H1 (cell line): ENCODE measurements at regions of chr1 and their contacts with region 1.

Region 1: GRCh38 chr1:201126832-201127754 is at the start of gene ASCL5:
- DNase-seq: peak in 1 of 2 experiments; percentile 67
- H3K4me3 ChIP-seq: peak within 1 kb of the TSS in 1 of 4 experiments; percentile 35; a peak in 1 of 8 replicates
- H3K27ac ChIP-seq: no peak within 1 kb of the TSS
- H3K4me1 ChIP-seq: peaks cover 3 to 11% (median 9%) of the 10 kb centered on the region in 4 experiments
- H3K27me3 ChIP-seq: no peaks in the 10 kb centered on the region; a peak in 1 of 7 replicates
- CTCF ChIP-seq: no peak
- EP300 ChIP-seq: no peak
- POLR2A ChIP-seq: no peak
- RAD21 ChIP-seq: no peak
- total RNA-seq, gene ASCL5: 0.41 and 0.44 TPM in 2 replicates

Region 2: DNA sequence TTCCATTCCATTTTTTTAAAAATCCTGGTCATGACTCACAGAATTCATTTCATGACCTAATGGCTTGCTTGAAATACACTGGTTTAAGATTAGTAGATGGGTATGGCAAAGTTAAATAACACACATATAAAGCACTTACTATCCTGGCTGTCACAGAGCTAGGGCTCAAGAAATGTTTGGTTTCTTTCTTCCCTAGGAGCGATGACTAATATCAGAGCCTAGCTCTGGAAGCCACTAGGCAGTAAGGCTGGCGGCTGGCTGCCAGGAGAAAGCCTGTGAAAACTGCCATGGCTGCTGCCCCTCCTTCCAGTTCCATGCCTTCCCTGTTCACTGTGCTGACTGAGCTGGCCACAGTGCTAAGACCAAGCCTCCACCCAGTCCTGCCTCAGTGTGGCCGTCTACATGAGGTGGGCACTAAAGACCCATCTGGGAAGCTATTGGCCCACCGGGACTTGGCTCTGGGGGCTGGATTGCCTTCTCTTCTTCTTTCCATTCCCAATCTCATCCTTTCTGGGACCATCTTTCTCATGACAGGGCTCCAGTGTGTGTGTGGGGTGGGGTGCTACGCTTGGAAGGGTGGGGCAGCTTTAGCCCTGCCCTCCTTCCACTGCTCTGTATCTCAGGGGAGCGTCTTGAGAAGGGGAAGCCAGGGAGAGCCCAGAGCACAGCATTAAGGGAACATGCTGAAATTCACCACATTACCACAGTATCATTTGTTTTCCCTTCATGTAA is 10.7 kb after region 1 on chr1:
- CTCF ChIA-PET with region 1: interaction called, 17 read pairs
- POLR2A ChIA-PET with region 1: interaction called, 4 read pairs
- DNase-seq: no peak
- H3K4me3 ChIP-seq: no peak overlapping the region
- H3K27ac ChIP-seq: no peak overlapping the region
- H3K4me1 ChIP-seq: no peaks in the 10 kb centered on the region
- H3K27me3 ChIP-seq: no peaks in the 10 kb centered on the region
- CTCF ChIP-seq: no peak
- EP300 ChIP-seq: no peak
- POLR2A ChIP-seq: no peak
- RAD21 ChIP-seq: no peak

Region 3: GRCh38 chr1:201167041-201167991 is 40.2 kb after region 1 on chr1:
- CTCF ChIA-PET with region 1: no interaction called
- POLR2A ChIA-PET with region 1: no interaction called
- DNase-seq: no peak
- H3K4me3 ChIP-seq: no peak overlapping the region
- H3K27ac ChIP-seq: no peak overlapping the region
- H3K4me1 ChIP-seq: peaks cover 4 to 9% (median 6%) of the 10 kb centered on the region in 4 experiments; a peak in 6 of 7 replicates
- H3K27me3 ChIP-seq: peaks cover 0 to 6% (median 4%) of the 10 kb centered on the region in 4 experiments; a peak in 3 of 7 replicates
- CTCF ChIP-seq: no peak
- EP300 ChIP-seq: no peak
- POLR2A ChIP-seq: no peak
- RAD21 ChIP-seq: no peak